GM12878 (cell line): ENCODE measurements at regions of chr13 and their contacts with region 1.

Region 1: DNA sequence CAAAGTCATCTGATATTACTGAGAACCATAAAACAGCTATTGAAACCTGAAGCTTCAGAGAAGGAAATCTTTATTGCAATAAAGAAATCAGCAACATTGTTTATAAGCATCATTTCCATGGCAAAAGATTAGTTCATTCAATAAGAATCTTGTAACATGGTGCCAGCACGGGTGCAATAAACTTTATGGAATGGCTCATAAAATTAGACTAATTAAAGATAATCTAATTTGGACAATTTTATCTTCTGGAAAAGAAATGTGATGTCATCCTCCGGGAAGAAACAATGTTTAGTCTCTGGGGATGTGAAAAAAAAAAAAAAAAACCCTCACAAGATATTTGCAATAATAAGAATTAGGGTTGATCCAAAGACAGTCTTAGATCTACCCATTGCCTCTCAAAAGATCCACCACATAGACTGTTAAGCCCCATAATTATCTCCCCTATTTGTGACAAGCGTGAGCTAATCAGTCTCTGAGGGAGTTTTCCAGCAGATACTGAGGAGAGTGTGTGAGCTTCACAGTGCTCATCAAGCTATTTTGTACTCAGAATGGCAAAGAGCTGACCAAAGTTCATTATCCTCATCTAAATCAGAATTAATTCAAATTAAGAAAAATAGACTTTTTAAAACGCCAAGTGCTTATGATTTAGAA is 297.0 kb upstream of the EDNRB start:
- DNase-seq: no peak
- ATAC-seq: no peak
- H3K4me3 ChIP-seq: no peak overlapping the region
- H3K27ac ChIP-seq: no peak overlapping the region
- H3K4me1 ChIP-seq: no peaks in the 10 kb centered on the region
- H3K27me3 ChIP-seq: no peaks in the 10 kb centered on the region
- CTCF ChIP-seq: no peak
- EP300 ChIP-seq: no peak
- POLR2A ChIP-seq: no peak
- RAD21 ChIP-seq: no peak

Region 2: DNA sequence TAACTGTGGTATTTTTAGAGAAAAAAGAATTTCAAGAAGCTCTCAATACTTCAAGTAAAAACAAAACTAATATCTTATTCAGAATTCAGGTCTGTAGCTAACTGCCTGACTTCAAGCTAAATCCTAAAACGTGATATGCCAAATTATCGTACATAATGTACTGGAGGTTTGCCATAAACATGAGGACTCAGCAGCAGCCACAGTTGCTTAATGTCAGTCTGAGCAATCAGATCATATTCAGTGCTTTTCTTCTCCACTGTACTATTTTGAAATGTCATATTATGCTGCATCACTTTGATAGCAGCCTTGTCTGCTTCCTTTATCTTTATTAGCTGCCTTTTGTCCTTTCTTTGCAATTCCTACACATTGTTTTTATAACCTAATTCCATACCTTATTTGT is 31.9 kb before region 1 on chr13:
- CTCF ChIA-PET with region 1: no interaction called
- POLR2A ChIA-PET with region 1: no interaction called
- RAD21 ChIA-PET with region 1: no interaction called
- SMC1A ChIA-PET with region 1: no interaction called
- in situ Hi-C with region 1: no loop called
- intact Hi-C with region 1: no loop called
- DNase-seq: no peak
- ATAC-seq: no peak
- H3K4me3 ChIP-seq: no peak overlapping the region
- H3K27ac ChIP-seq: no peak overlapping the region
- H3K4me1 ChIP-seq: no peaks in the 10 kb centered on the region
- H3K27me3 ChIP-seq: no peaks in the 10 kb centered on the region
- CTCF ChIP-seq: no peak
- EP300 ChIP-seq: no peak
- POLR2A ChIP-seq: no peak
- RAD21 ChIP-seq: no peak

Region 3: GRCh38 chr13:78201411-78201810 is 14.2 kb before region 1 on chr13:
- CTCF ChIA-PET with region 1: interaction called, 3 read pairs
- POLR2A ChIA-PET with region 1: no interaction called
- RAD21 ChIA-PET with region 1: interaction called, 4 read pairs
- SMC1A ChIA-PET with region 1: interaction called, 13 read pairs
- in situ Hi-C with region 1: no loop called
- intact Hi-C with region 1: no loop called
- DNase-seq: peak; percentile 64
- ATAC-seq: peak; percentile 86
- H3K4me3 ChIP-seq: no peak overlapping the region
- H3K27ac ChIP-seq: no peak overlapping the region
- H3K4me1 ChIP-seq: no peaks in the 10 kb centered on the region
- H3K27me3 ChIP-seq: no peaks in the 10 kb centered on the region
- CTCF ChIP-seq: no peak
- EP300 ChIP-seq: peak in 1 of 2 experiments; percentile 59; a peak in 1 of 4 replicates
- POLR2A ChIP-seq: no peak
- RAD21 ChIP-seq: no peak

Region 4: GRCh38 chr13:79018166-79018565 is 802.6 kb after region 1 on chr13:
- CTCF ChIA-PET with region 1: no interaction called
- POLR2A ChIA-PET with region 1: no interaction called
- RAD21 ChIA-PET with region 1: no interaction called
- SMC1A ChIA-PET with region 1: no interaction called
- in situ Hi-C with region 1: no loop called
- intact Hi-C with region 1: no loop called
- DNase-seq: no peak
- ATAC-seq: no peak
- H3K4me3 ChIP-seq: no peak overlapping the region
- H3K27ac ChIP-seq: no peak overlapping the region
- H3K4me1 ChIP-seq: no peaks in the 10 kb centered on the region
- H3K27me3 ChIP-seq: no peaks in the 10 kb centered on the region
- CTCF ChIP-seq: no peak
- EP300 ChIP-seq: no peak
- POLR2A ChIP-seq: no peak
- RAD21 ChIP-seq: no peak